ENCODE measurements at regions of chr20 and their contacts with region 1.

Region 1: DNA sequence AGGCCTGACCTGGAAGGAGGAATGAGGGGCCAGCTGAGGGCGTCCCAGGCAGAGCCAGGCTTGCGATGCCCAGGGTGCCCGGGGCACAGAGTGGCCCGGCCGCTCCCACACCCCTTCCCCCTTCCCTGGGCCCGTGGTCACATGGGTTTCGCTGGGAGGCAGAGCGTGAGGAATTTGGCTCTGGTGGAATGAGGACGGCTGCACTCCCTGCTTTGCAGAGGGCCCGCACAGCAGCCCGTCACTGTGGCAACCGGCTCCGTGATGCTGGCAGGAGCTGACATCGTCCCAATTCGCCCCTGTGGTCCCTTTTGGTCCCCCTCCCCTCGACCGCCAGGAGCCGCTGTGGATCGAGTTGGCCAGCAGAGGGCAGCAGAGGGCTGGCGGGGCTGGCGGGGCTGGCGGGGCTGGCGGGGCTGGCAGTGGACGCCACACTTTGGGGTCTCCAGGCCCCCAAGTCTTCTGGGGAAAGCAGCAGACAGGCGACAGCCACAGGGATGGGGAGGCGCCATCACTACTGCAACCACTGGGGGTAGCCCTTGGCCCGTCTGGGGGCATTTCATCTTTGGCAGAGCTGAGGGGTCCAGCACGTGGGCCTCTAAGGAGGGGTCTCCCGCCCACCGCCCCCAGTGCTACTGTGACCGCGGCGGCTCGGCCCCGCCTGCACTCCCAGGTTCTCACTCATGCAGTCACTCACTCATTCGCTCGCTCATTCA is 49.6 kb upstream of the BHLHE23 start:
- DNase-seq: peak in 8 of 9 experiments; percentile 12 to 60 (median 40)
- ATAC-seq: peak; percentile 71
- H3K4me3 ChIP-seq: no peak overlapping the region
- H3K4me3 Mint-ChIP-seq: no peak overlapping the region
- H3K27ac ChIP-seq: no peak overlapping the region
- H3K27ac Mint-ChIP-seq: no peak overlapping the region
- H3K4me1 ChIP-seq: no peaks in the 10 kb centered on the region
- H3K4me1 Mint-ChIP-seq: no peaks in the 10 kb centered on the region
- H3K27me3 ChIP-seq: peaks cover 2 to 3% of the 10 kb centered on the region in 2 experiments
- H3K27me3 Mint-ChIP-seq: peaks cover 11% of the 10 kb centered on the region
- CTCF ChIP-seq: peak; percentile 75

Region 2: DNA sequence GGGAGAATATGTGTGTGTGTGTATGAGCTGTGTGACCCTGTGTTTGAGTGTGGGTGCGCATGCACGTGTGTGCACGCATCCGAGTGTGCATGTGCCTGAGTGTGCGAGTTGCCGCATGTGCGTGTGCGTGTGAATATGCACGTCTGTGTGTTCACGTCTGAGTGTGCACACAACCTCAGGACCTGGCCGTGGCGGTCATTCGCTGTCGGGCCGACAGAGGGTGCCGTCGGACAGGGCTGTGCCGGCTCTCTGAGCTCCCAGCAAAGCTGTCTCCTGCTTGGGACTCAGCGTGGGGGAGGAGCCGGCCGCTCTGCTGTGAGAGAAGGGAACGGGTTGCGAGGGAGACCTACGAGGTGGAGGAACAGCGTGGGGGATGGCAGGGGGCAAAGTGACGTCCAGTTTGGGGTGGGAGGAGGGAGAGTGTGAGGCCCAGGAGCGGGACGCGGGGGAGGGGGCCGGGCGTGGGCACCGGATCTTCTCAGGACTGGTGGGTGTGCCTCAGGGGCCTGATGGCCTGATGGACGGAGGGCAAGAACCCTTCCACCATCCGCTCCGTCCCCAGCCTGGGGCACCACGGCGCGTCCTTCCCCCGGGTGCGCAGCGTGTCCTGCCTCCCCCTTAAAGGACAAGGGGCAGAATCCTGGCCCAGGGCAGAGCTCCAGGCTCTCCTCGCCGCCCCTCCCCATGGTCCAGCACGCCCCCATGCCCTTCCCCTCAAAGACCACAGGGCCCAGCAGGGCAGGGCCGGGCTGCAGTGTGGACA is 83.9 kb before region 1 on chr20:
- CTCF ChIA-PET with region 1: interaction called, 7 read pairs
- POLR2A ChIA-PET with region 1: no interaction called
- intact Hi-C with region 1: loop called in 1 of 2 experiments (anchors 2 kb)
- DNase-seq: peak; percentile 75 to 88 (median 86)
- ATAC-seq: peak; percentile 99
- H3K4me3 ChIP-seq: peak overlapping the region in 1 of 2 experiments; percentile 36
- H3K4me3 Mint-ChIP-seq: peak overlapping the region; percentile 79
- H3K27ac ChIP-seq: no peak overlapping the region
- H3K27ac Mint-ChIP-seq: peak overlapping the region; percentile 42
- H3K4me1 ChIP-seq: peaks cover 18% of the 10 kb centered on the region
- H3K4me1 Mint-ChIP-seq: peaks cover 23% of the 10 kb centered on the region
- H3K27me3 ChIP-seq: peaks cover 16 to 48% of the 10 kb centered on the region in 2 experiments
- H3K27me3 Mint-ChIP-seq: peaks cover 45% of the 10 kb centered on the region
- CTCF ChIP-seq: peak; percentile 84

Region 3: GRCh38 chr20:63290677-63291472 is 234.5 kb after region 1 on chr20:
- CTCF ChIA-PET with region 1: no interaction called
- POLR2A ChIA-PET with region 1: no interaction called
- intact Hi-C with region 1: loop called in 1 of 2 experiments (anchors 5 kb)
- DNase-seq: peak; percentile 36 to 73 (median 62)
- ATAC-seq: peak; percentile 80
- H3K4me3 ChIP-seq: no peak overlapping the region
- H3K4me3 Mint-ChIP-seq: no peak overlapping the region
- H3K27ac ChIP-seq: no peak overlapping the region
- H3K27ac Mint-ChIP-seq: no peak overlapping the region
- H3K4me1 ChIP-seq: peaks cover 11% of the 10 kb centered on the region
- H3K4me1 Mint-ChIP-seq: peaks cover 8% of the 10 kb centered on the region
- H3K27me3 ChIP-seq: no peaks in the 10 kb centered on the region
- H3K27me3 Mint-ChIP-seq: peaks cover 6% of the 10 kb centered on the region
- CTCF ChIP-seq: peak; percentile 76

Region 4: GRCh38 chr20:63381807-63382322 is 325.5 kb after region 1 on chr20:
- CTCF ChIA-PET with region 1: no interaction called
- POLR2A ChIA-PET with region 1: no interaction called
- intact Hi-C with region 1: loop called in 1 of 2 experiments (anchors 5 kb)
- DNase-seq: peak in 7 of 9 experiments; percentile 6 to 58 (median 46)
- ATAC-seq: peak; percentile 51
- H3K4me3 ChIP-seq: no peak overlapping the region
- H3K4me3 Mint-ChIP-seq: no peak overlapping the region
- H3K27ac ChIP-seq: no peak overlapping the region
- H3K27ac Mint-ChIP-seq: no peak overlapping the region
- H3K4me1 ChIP-seq: no peaks in the 10 kb centered on the region
- H3K4me1 Mint-ChIP-seq: peaks cover 3% of the 10 kb centered on the region
- H3K27me3 ChIP-seq: no peaks in the 10 kb centered on the region
- H3K27me3 Mint-ChIP-seq: peaks cover 14% of the 10 kb centered on the region
- CTCF ChIP-seq: peak; percentile 77

Region 5: GRCh38 chr20:63434599-63435378 is 378.4 kb after region 1 on chr20:
- CTCF ChIA-PET with region 1: no interaction called
- POLR2A ChIA-PET with region 1: no interaction called
- intact Hi-C with region 1: no loop called
- DNase-seq: peak; percentile 55 to 88 (median 76)
- ATAC-seq: peak; percentile 85
- H3K4me3 ChIP-seq: peak overlapping the region in 1 of 2 experiments; percentile 6
- H3K4me3 Mint-ChIP-seq: peak overlapping the region; percentile 44
- H3K27ac ChIP-seq: peak overlapping the region; percentile 11 to 21
- H3K27ac Mint-ChIP-seq: peak overlapping the region; percentile 79
- H3K4me1 ChIP-seq: peaks cover 8% of the 10 kb centered on the region
- H3K4me1 Mint-ChIP-seq: peaks cover 12% of the 10 kb centered on the region
- H3K27me3 ChIP-seq: no peaks in the 10 kb centered on the region
- H3K27me3 Mint-ChIP-seq: peaks cover 2% of the 10 kb centered on the region
- CTCF ChIP-seq: peak; percentile 92